ENCODE measurements at regions of chr5 and their contacts with region 1.

Region 1: DNA sequence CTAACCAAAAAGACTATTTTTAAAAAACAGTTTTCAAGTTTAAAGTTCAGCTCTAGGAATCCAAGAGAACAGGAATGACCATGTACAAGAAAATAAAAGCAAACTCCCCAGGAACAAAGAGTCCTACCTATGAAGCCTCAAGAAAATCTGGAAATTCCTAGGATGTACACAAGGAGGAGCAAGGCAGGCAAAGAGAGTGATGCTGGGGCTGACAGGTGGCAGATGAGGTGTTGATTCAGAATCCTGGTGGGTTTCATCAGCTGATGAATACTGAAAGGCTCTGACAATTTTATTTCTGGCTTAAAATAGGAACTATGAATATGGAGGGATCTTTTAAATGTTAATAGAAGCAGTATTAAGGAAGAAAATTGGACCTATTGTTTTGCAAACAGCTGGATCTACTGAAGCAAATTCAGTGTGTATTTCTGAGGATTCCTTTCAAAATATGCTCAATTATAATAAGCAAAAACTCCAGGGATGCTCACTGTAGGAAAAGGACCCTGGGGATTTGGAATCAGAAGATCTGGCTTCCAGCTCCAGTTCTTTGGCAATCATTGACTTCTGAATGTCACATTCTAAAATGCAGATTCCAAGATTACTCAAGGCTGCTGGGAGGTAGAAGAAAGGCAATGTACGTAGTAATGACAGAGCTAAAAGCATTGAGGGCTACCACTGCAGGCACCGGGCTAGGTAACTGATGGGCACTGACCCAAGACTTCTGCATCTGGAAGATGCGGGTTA is 28.0 kb upstream of the SH3RF2 start:
- DNase-seq: no peak
- ATAC-seq: peak; percentile 74
- H3K4me3 Mint-ChIP-seq: no peak overlapping the region
- H3K27ac Mint-ChIP-seq: no peak overlapping the region
- H3K4me1 Mint-ChIP-seq: peaks cover 4% of the 10 kb centered on the region
- H3K27me3 Mint-ChIP-seq: no peaks in the 10 kb centered on the region; the same call in 1 of the 2 replicates
- CTCF ChIP-seq: no peak

Region 2: DNA sequence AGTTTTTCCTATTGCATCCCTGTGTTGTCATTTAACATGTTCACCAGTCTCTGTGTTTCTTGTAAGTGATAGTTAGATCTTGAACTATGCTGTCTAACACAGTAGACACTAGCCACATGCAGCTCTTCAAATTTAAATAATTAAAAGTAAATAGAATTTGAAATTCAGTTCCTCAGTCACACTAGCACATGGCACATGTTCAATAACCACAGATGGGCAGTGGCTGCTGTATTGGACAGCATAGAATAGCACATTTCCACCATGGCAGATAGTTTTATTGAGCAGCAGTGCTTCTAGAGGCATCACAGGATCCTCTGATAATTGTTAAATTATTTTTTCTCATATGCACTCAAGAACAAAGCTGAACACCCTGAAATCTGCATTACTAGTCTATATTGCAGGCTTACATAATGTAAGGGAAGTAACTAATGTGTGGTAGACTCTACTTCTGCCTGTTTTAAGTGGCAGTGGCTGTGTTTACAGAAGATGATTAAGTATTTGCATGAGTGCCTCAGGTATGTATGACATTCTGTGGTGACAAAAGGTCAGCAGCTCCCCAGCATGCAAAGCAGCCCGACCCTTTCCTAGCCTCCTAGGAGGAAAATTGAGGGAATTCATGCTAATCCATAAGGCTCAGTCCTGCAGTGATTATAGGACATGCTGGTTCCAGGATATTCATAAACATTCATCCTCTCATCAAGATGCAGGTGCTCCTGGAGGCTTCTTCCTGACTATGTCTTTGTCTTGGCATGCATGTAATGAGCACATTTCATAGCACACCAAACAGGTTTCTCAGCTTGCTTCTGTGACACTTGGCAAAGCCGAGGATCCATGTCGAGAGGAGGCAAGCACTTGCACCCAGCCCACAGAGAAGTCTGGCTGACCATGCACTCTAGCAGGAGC is 73.5 kb after region 1 on chr5:
- CTCF ChIA-PET with region 1: interaction called, 20 read pairs
- POLR2A ChIA-PET with region 1: no interaction called
- DNase-seq: no peak
- ATAC-seq: no peak
- H3K4me3 Mint-ChIP-seq: no peak overlapping the region
- H3K27ac Mint-ChIP-seq: no peak overlapping the region
- H3K4me1 Mint-ChIP-seq: peaks cover 9% of the 10 kb centered on the region
- H3K27me3 Mint-ChIP-seq: 0 out of 2 replicates have a peak, but pooled peaks cover 2% of the 10 kb centered on the region
- CTCF ChIP-seq: no peak